SK-N-SH (cell line): ENCODE measurements at regions of chr3 and their contacts with region 1.

Region 1: DNA sequence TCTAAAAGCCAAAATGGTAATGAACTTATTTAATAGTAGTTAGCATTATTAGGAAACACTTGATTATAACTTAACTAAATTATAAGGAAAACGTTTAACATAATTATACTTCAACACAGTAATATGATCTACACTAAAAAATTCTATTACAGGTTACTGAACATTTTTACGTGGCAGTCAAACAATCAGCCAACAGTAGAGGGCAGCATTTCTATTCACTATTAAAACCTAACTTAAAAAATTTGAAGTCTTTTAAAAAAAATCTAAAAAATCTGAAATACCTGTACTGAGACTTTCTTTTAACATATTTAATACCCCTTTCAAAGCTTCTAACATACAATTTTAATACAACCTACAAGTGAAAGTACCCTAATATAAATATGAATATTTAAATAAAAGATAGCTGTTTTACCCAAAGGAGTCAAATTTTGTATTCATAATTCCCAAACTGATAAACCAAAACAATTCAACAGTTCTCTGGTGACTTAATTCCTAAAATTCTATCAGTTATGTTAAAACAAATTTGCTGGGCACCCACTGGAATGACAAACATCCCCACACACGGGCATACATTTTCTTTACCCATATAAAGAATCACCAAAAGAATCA is 41.5 kb downstream of the DLG1 start:
- DNase-seq: peak; percentile 5
- H3K4me3 ChIP-seq: no peak overlapping the region
- H3K27ac ChIP-seq: peak overlapping the region in 1 of 2 experiments; percentile 28; a peak in 2 of 4 replicates
- H3K4me1 ChIP-seq: peaks cover 2 to 6% of the 10 kb centered on the region in 2 experiments; a peak in 3 of 4 replicates
- H3K27me3 ChIP-seq: no peaks in the 10 kb centered on the region
- CTCF ChIP-seq: peak; percentile 90
- EP300 ChIP-seq: no peak
- RAD21 ChIP-seq: peak; percentile 79

Region 2: GRCh38 chr3:196749125-196749524 is 507.8 kb before region 1 on chr3:
- CTCF ChIA-PET with region 1: no interaction called
- POLR2A ChIA-PET with region 1: no interaction called
- DNase-seq: no peak
- H3K4me3 ChIP-seq: no peak overlapping the region
- H3K27ac ChIP-seq: no peak overlapping the region
- H3K4me1 ChIP-seq: no peaks in the 10 kb centered on the region
- H3K27me3 ChIP-seq: no peaks in the 10 kb centered on the region
- CTCF ChIP-seq: no peak
- EP300 ChIP-seq: no peak
- RAD21 ChIP-seq: no peak

Region 3: DNA sequence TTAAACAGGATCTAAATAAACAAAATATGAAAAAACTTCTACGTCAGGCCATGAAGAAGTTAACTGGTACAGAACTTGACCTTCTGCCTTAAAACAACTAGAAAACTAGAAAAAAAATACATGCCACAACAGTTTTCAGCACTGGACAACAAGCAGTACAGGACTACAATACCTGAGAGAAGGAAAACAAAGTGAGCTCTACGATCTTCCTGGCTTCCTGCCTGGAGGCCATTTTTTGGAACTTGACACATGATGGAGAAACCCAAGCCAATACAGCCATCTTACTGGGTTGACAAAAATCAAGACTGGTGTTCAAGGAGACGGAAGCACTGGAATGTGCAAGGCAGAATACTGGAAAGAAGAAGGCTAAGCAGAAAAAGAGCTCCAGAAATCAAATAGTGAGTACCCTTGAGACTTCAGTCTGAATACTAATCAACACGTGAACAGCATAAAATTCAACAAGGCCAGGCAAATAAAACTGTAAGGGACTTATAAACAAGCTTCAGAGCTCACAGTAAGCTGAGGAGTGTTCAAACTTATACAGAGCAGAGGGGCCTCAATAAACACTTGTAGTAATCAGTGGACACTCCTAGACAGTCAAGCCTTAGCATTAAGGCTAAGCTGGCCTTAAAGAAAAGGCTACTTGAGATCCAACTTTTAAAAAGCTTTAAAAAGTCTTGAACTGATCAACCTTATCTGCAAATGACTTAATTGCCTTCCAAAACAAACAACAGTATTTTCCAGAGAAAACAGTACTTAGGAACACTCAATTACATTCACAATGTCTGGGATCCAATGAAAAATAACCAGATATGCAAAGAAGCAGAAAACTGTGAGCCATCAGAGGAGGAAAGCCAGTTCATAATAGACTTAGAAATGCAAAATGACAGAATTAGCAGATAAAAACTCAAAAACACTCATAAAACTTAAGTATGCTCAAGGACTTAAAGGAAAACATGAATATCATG is 21.7 kb before region 1 on chr3:
- CTCF ChIA-PET with region 1: interaction called, 33 read pairs
- POLR2A ChIA-PET with region 1: no interaction called
- DNase-seq: no peak
- H3K4me3 ChIP-seq: no peak overlapping the region
- H3K27ac ChIP-seq: no peak overlapping the region
- H3K4me1 ChIP-seq: no peaks in the 10 kb centered on the region
- H3K27me3 ChIP-seq: no peaks in the 10 kb centered on the region
- CTCF ChIP-seq: no peak
- EP300 ChIP-seq: no peak
- RAD21 ChIP-seq: no peak

Region 4: GRCh38 chr3:197286678-197287077 is 29.7 kb after region 1 on chr3:
- CTCF ChIA-PET with region 1: interaction called, 15 read pairs
- POLR2A ChIA-PET with region 1: no interaction called
- DNase-seq: no peak
- H3K4me3 ChIP-seq: no peak overlapping the region
- H3K27ac ChIP-seq: no peak overlapping the region
- H3K4me1 ChIP-seq: peaks cover 0 to 7% of the 10 kb centered on the region in 2 experiments; a peak in 3 of 4 replicates
- H3K27me3 ChIP-seq: no peaks in the 10 kb centered on the region
- CTCF ChIP-seq: no peak
- EP300 ChIP-seq: no peak
- RAD21 ChIP-seq: no peak

Region 5: DNA sequence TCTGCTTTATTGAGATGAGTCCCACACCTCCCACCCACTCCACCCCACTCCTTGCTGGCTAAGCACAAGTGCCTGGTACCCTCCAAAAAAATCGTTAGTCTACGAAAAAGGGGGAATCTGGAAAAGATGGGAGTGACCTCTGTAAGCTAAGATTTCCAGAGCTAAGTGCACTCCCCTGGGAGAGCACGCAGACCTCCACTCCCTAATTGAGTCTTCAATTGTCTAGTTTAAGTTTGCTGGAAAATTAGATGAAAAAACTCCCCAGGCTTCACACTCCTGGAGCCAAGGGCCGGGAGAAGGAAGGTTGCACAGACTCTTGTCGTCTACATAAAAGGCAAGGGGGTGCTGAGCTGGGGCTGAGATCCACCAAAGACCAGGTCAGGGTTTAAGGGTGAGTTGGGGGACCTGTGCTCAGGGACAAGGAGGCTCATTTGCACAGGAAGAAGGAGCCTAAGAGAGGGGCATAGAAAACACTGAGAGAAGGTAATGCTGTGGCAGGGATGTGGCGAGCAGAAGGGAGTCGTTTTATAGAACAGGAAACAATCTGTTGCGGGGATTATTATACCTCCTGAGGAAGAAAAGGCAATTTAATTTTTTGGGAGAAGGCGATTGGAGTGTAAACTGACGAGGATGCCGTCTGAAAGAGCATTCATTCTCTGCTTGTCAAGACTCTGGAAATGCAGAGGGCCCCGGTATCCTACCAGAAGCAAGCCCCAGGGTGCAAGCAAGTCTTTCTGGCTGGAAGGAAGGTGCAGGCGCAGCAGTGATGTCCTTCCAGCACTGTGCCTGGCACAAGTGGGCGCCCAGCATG is 167.9 kb after region 1 on chr3:
- CTCF ChIA-PET with region 1: interaction called, 13 read pairs
- POLR2A ChIA-PET with region 1: no interaction called
- DNase-seq: no peak
- H3K4me3 ChIP-seq: no peak overlapping the region
- H3K27ac ChIP-seq: no peak overlapping the region
- H3K4me1 ChIP-seq: peaks cover 17 to 53% of the 10 kb centered on the region in 2 experiments; a peak in 3 of 4 replicates
- H3K27me3 ChIP-seq: no peaks in the 10 kb centered on the region
- CTCF ChIP-seq: no peak
- EP300 ChIP-seq: no peak
- RAD21 ChIP-seq: no peak

Region 6: DNA sequence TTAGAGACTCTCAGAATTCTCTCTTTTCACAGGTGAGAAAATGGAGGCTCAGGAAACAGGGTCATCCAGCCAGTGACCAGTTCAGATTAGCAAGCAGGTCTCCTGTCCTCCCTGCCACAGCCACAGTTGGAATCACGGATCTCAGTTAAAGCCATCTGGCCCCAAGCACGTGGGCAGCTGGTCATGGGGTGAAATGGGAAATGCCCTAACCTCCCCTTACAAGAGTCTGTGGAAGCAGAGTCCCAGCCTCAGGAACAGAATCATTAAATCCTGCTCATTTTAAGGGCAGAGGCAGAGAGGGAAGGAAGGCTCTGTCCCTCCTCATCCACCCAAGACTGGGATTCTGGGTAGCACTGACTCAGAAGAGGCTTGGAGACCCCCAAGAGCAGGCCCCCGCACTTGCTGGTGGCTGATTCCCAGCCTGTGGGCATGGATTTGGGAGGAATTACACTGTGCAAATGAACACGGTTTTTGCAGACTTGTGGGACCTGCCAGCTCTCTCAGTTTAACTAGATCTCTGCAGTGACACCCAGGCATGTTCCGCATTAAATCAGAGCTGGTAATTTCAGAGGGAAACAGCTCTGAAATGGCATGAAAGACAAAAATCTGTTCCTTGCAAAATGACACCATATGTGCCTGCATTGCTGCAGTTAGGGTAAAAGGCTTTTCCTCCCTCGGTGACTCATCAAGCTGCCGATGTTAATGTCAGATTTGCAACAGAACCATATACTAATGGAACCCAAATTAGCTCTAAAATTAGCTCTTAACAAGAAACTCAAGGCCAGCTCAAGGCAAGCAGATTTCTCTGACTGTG is 209.9 kb after region 1 on chr3:
- CTCF ChIA-PET with region 1: interaction called, 15 read pairs
- POLR2A ChIA-PET with region 1: no interaction called
- DNase-seq: peak; percentile 78
- H3K4me3 ChIP-seq: peak overlapping the region; percentile 28 to 30; a peak in 3 of 4 replicates
- H3K27ac ChIP-seq: peak overlapping the region; percentile 82 to 99
- H3K4me1 ChIP-seq: peaks cover 24 to 52% of the 10 kb centered on the region in 2 experiments
- H3K27me3 ChIP-seq: no peaks in the 10 kb centered on the region
- CTCF ChIP-seq: no peak
- EP300 ChIP-seq: peak; percentile 81 to 90
- RAD21 ChIP-seq: peak; percentile 25

Region 7: DNA sequence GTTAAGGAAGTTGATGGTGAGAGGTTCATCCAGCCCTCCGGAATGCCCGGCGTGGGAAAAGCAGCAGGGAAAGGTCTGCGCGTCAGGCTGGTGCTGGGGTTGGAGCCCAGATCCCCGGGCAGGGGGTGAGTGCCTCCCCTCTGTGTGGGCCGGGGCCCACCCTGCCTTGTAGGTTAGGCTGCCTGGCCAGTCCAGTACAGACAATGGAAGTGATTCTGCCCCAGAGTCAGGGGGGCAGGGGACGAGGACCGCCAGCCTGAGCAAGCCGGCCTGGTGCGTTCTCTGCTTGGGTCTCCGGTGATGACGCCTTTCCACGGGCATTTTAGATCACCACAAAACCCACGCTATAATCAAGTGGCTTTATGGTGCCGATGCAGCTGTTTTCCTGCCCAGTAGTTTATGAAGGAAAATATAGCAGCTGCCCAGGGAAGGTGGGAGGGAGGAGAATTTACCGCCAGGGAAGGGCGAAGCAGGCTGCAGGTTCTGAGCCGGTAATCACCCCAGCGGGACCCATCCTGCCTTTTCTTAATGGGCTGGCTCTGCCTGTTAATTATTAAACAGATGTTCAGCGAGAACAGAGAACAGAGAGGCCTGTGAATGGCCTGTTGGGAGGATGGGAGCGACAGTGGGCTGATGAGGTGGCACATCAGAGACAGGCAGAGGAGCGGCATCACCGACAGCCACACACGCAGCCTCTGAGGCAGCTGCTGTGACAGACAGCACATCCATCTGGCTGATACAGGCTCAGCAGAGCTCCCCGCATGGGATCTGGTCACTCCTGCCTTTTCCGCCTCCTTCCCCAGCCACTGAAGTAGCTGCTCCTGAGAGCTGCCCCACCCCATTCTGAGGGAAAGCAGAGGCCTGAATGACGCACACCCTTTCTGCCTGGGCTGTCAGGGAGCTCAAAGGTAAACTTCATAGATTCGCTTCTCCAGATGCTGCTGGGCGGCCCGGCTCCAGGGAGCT is 263.7 kb after region 1 on chr3:
- CTCF ChIA-PET with region 1: interaction called, 25 read pairs
- POLR2A ChIA-PET with region 1: no interaction called
- DNase-seq: peak; percentile 88
- H3K4me3 ChIP-seq: no peak overlapping the region
- H3K27ac ChIP-seq: peak overlapping the region in 1 of 2 experiments; percentile 94; a peak in 2 of 4 replicates
- H3K4me1 ChIP-seq: peaks cover 13 to 42% of the 10 kb centered on the region in 2 experiments; a peak in 3 of 4 replicates
- H3K27me3 ChIP-seq: no peaks in the 10 kb centered on the region
- CTCF ChIP-seq: no peak
- EP300 ChIP-seq: peak in 1 of 2 experiments; percentile 66; a peak in 2 of 4 replicates
- RAD21 ChIP-seq: no peak; the same call in 1 of the 2 replicates